ENCODE measurements at regions of chr6 and their contacts with region 1.

Region 1: GRCh38 chr6:159104163-159104925 is 59.6 kb upstream of the TAGAP start:
- DNase-seq: peak; percentile 65 to 90 (median 78)
- ATAC-seq: peak; percentile 49
- H3K4me3 ChIP-seq: no peak overlapping the region
- H3K4me3 Mint-ChIP-seq: peak overlapping the region; percentile 50
- H3K27ac ChIP-seq: peak overlapping the region in 1 of 2 experiments; percentile 50
- H3K27ac Mint-ChIP-seq: peak overlapping the region; percentile 84
- H3K4me1 ChIP-seq: peaks cover 64% of the 10 kb centered on the region
- H3K4me1 Mint-ChIP-seq: peaks cover 75% of the 10 kb centered on the region
- H3K27me3 ChIP-seq: no peaks in the 10 kb centered on the region
- H3K27me3 Mint-ChIP-seq: no peaks in the 10 kb centered on the region
- CTCF ChIP-seq: peak; percentile 94

Region 2: DNA sequence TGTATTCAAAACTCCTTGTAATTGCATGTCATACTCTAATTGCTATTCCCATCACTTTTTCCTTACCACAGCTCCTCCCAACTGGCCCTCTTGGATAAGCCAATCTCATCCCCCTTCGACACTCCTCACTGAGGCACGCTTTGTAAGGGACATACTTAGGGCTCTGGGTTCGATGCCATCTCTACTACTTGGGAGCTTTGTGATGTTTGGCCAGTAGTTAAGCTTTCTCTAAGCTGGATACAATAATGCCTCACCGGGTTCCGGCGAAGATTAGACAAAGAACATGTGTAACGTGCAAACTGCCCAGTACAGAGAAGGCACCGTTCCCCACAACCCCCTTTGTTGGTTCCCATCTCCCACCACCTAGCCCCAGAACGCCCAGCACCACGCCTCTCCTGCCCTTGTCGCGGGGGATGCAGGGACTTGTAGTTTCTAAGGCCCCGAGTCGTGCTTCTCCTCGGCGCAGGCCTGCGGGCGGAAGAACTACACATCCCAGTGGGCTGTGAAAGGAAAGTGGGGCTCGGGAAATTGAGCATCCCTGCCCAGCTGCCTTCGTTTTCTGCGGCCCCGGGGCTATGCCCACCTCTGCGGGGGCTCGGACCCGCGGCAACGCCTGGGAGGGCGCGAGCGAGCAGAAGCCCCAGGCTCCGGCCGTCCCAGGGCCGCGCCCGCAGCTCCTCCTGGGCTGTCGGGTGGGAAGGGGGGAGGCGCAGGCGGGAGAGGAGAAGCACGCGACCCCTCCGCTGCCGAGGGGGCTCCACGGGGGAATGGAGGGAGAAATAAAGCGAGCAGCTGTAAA is 1724.5 kb before region 1 on chr6:
- CTCF ChIA-PET with region 1: no interaction called
- POLR2A ChIA-PET with region 1: no interaction called
- intact Hi-C with region 1: loop called in 1 of 2 experiments (anchors 2 kb)
- DNase-seq: peak; percentile 76 to 92 (median 89)
- ATAC-seq: peak; percentile 79
- H3K4me3 ChIP-seq: peak overlapping the region; percentile 92 to 96
- H3K4me3 Mint-ChIP-seq: peak overlapping the region; percentile 83
- H3K27ac ChIP-seq: peak overlapping the region; percentile 68 to 80
- H3K27ac Mint-ChIP-seq: peak overlapping the region; percentile 64
- H3K4me1 ChIP-seq: peaks cover 10% of the 10 kb centered on the region
- H3K4me1 Mint-ChIP-seq: peaks cover 20% of the 10 kb centered on the region
- H3K27me3 ChIP-seq: no peaks in the 10 kb centered on the region
- H3K27me3 Mint-ChIP-seq: no peaks in the 10 kb centered on the region
- CTCF ChIP-seq: no peak

Region 3: GRCh38 chr6:158649289-158650143 is 454.8 kb before region 1 on chr6 and contains the start of gene SYTL3:
- CTCF ChIA-PET with region 1: interaction called, 3 read pairs
- POLR2A ChIA-PET with region 1: no interaction called
- intact Hi-C with region 1: loop called (anchors 5 kb)
- DNase-seq: peak; percentile 50 to 97 (median 76)
- ATAC-seq: peak; percentile 61
- H3K4me3 ChIP-seq: peak within 1 kb of the TSS in 1 of 2 experiments; percentile 43
- H3K4me3 Mint-ChIP-seq: peak within 1 kb of the TSS; percentile 77
- H3K27ac ChIP-seq: peak within 1 kb of the TSS; percentile 53 to 76
- H3K27ac Mint-ChIP-seq: peak within 1 kb of the TSS; percentile 85
- H3K4me1 ChIP-seq: peaks cover 51% of the 10 kb centered on the region
- H3K4me1 Mint-ChIP-seq: peaks cover 64% of the 10 kb centered on the region
- H3K27me3 ChIP-seq: no peaks in the 10 kb centered on the region
- H3K27me3 Mint-ChIP-seq: no peaks in the 10 kb centered on the region
- CTCF ChIP-seq: no peak
- total RNA-seq, gene SYTL3: 38.2 to 44.6 TPM

Region 4: GRCh38 chr6:158869826-158870648 is 234.3 kb before region 1 on chr6:
- CTCF ChIA-PET with region 1: no interaction called
- POLR2A ChIA-PET with region 1: no interaction called
- intact Hi-C with region 1: loop called in 1 of 2 experiments (anchors 5 kb)
- DNase-seq: peak in 5 of 9 experiments; percentile 63 to 99 (median 94)
- ATAC-seq: peak; percentile 75
- H3K4me3 ChIP-seq: peak overlapping the region; percentile 57 to 61
- H3K4me3 Mint-ChIP-seq: peak overlapping the region; percentile 89
- H3K27ac ChIP-seq: peak overlapping the region; percentile 86 to 98
- H3K27ac Mint-ChIP-seq: peak overlapping the region; percentile 99
- H3K4me1 ChIP-seq: peaks cover 20% of the 10 kb centered on the region
- H3K4me1 Mint-ChIP-seq: peaks cover 34% of the 10 kb centered on the region
- H3K27me3 ChIP-seq: no peaks in the 10 kb centered on the region
- H3K27me3 Mint-ChIP-seq: no peaks in the 10 kb centered on the region
- CTCF ChIP-seq: no peak

Region 5: DNA sequence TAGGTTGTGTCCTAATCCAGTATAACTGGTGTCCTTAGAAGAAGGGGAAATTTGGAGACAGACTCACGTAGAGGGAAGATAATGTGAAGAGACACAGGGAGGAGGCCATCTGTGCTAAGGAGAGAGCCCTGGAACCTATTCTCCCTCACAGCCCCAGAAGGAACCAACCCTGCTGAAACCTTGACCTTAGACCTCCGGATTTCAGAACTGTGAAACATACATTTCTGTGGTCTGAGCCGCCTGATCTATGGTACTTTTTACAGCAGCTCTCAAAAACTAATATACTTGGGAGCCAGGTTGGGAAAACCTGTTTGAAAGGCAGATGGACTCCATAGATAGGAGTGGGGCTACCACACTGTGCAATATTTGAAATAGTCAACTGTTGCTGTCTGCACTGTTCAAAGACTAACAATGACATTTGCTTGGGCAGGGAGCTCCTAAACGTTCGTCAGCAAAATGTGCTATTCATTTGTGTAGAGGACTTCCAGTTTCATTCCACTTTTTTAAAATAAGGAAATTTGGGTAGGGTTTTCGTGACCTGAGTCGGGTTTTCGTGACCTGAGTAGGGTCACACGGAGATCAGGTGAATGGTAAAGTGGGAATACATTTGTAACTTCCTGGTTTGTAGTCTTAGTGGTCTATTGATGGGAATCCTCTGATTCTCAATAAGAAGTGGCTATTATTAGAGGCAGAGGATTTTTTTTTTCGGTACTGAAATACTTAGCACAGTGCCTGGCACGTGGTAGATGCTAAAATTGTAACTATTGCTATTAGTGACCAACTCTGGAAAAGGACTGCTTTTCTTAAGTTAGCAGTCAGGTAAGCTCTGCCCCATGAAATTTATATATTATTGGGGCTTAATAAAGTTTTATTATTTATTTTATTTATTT is 70.9 kb before region 1 on chr6:
- CTCF ChIA-PET with region 1: interaction called, 278 read pairs
- POLR2A ChIA-PET with region 1: interaction called, 9 read pairs
- intact Hi-C with region 1: no loop called
- DNase-seq: no peak
- ATAC-seq: no peak
- H3K4me3 ChIP-seq: no peak overlapping the region
- H3K4me3 Mint-ChIP-seq: no peak overlapping the region
- H3K27ac ChIP-seq: peak overlapping the region in 1 of 2 experiments; percentile 10
- H3K27ac Mint-ChIP-seq: peak overlapping the region; percentile 80
- H3K4me1 ChIP-seq: peaks cover 15% of the 10 kb centered on the region
- H3K4me1 Mint-ChIP-seq: peaks cover 31% of the 10 kb centered on the region
- H3K27me3 ChIP-seq: no peaks in the 10 kb centered on the region
- H3K27me3 Mint-ChIP-seq: no peaks in the 10 kb centered on the region
- CTCF ChIP-seq: no peak

Region 6: GRCh38 chr6:159062564-159062945 is 41.8 kb before region 1 on chr6:
- CTCF ChIA-PET with region 1: interaction called, 44 read pairs
- POLR2A ChIA-PET with region 1: interaction called, 15 read pairs
- intact Hi-C with region 1: loop called in 1 of 2 experiments (anchors 1 kb)
- DNase-seq: peak in 8 of 9 experiments; percentile 48 to 91 (median 70)
- ATAC-seq: peak; percentile 90
- H3K4me3 ChIP-seq: peak overlapping the region in 1 of 2 experiments; percentile 27
- H3K4me3 Mint-ChIP-seq: peak overlapping the region; percentile 68
- H3K27ac ChIP-seq: peak overlapping the region; percentile 87 to 92
- H3K27ac Mint-ChIP-seq: peak overlapping the region; percentile 93
- H3K4me1 ChIP-seq: peaks cover 57% of the 10 kb centered on the region
- H3K4me1 Mint-ChIP-seq: peaks cover 83% of the 10 kb centered on the region
- H3K27me3 ChIP-seq: no peaks in the 10 kb centered on the region
- H3K27me3 Mint-ChIP-seq: no peaks in the 10 kb centered on the region
- CTCF ChIP-seq: no peak

Region 7: DNA sequence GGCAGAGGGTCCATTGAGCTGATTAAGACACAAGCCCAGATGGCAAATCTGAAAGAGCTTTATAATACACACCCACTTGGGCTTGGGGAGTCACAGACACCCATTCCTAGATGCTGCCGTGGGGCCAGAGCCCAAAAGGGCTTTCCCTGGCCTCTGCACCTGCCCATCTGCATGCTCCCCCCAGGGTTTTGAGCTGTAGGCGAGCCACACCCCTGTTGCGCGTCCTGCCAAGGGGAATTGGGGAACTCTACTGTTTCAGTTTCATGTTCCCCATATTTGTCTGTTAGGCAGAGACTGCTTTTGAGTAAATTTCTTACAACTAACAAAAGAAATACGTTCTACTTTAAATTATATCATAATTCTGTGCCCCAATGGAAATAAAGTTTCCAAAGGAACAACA is 12.0 kb after region 1 on chr6:
- CTCF ChIA-PET with region 1: interaction called, 14 read pairs
- POLR2A ChIA-PET with region 1: no interaction called
- intact Hi-C with region 1: no loop called
- DNase-seq: no peak
- ATAC-seq: no peak
- H3K4me3 ChIP-seq: no peak overlapping the region
- H3K4me3 Mint-ChIP-seq: no peak overlapping the region
- H3K27ac ChIP-seq: no peak overlapping the region
- H3K27ac Mint-ChIP-seq: no peak overlapping the region
- H3K4me1 ChIP-seq: no peaks in the 10 kb centered on the region
- H3K4me1 Mint-ChIP-seq: peaks cover 6% of the 10 kb centered on the region
- H3K27me3 ChIP-seq: no peaks in the 10 kb centered on the region
- H3K27me3 Mint-ChIP-seq: no peaks in the 10 kb centered on the region
- CTCF ChIP-seq: no peak

Measured in CD8-positive, alpha-beta T cell (primary cell).